WTC11 (cell line): ENCODE measurements at regions of chr7 and their contacts with region 1.

Region 1: GRCh38 chr7:151448261-151449252 is 8.6 kb upstream of the CRYGN start:
- DNase-seq: peak; percentile 82
- ATAC-seq: peak; percentile 80
- H3K4me3 Mint-ChIP-seq: peak overlapping the region; percentile 60
- H3K27ac Mint-ChIP-seq: no peak overlapping the region
- H3K4me1 Mint-ChIP-seq: peaks cover 20% of the 10 kb centered on the region
- H3K27me3 Mint-ChIP-seq: peaks cover 15% of the 10 kb centered on the region
- CTCF ChIP-seq: peak; percentile 72

Region 2: GRCh38 chr7:151368136-151368571 is 80.4 kb before region 1 on chr7:
- CTCF ChIA-PET with region 1: interaction called, 46 read pairs
- POLR2A ChIA-PET with region 1: no interaction called
- DNase-seq: peak; percentile 89
- ATAC-seq: peak; percentile 99
- H3K4me3 Mint-ChIP-seq: no peak overlapping the region
- H3K27ac Mint-ChIP-seq: no peak overlapping the region
- H3K4me1 Mint-ChIP-seq: peaks cover 11% of the 10 kb centered on the region
- H3K27me3 Mint-ChIP-seq: no peaks in the 10 kb centered on the region
- CTCF ChIP-seq: peak; percentile 93

Region 3: DNA sequence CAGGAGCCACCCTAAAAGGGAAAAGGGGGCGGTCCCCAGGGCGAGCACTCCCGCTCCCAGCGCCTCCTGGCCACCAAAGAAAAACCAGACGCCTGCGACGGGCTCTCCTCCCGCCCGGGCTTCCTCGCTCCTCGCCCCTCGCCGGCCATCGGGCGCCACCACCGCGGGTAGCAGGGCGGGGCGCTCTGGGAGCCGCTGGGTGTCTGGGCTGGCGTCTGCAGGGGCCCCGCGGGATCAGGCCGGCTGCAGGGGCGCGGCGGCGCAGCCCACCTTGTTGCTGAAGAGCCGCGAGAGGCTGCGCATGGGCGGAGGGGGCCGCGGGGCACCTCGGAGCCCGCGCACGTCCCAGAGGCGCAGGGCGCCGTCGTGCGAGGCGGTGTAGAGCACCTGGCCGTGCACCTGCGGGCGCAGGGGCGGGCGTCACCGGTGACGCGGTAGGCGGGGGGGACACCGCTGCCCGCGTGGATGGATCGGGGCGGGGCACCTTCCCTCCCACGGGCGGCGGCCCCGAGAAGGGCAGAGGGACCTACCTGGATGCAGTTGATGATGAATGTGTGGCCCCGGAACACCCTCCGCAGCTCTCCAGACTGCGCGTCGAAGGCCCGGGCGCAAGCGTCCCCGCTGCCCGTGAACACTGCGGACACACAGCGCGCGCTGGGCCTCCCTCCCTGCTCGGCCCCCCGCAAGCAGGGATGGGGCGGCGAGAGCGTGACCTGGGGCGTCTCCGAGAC is 67.0 kb before region 1 on chr7:
- CTCF ChIA-PET with region 1: interaction called, 12 read pairs
- POLR2A ChIA-PET with region 1: no interaction called
- DNase-seq: peak; percentile 74
- ATAC-seq: peak; percentile 79
- H3K4me3 Mint-ChIP-seq: peak overlapping the region; percentile 68
- H3K27ac Mint-ChIP-seq: no peak overlapping the region
- H3K4me1 Mint-ChIP-seq: peaks cover 12% of the 10 kb centered on the region
- H3K27me3 Mint-ChIP-seq: peaks cover 25% of the 10 kb centered on the region
- CTCF ChIP-seq: no peak

Region 4: GRCh38 chr7:151400626-151401315 is 47.8 kb before region 1 on chr7:
- CTCF ChIA-PET with region 1: interaction called, 16 read pairs
- POLR2A ChIA-PET with region 1: no interaction called
- DNase-seq: no peak
- ATAC-seq: no peak
- H3K4me3 Mint-ChIP-seq: no peak overlapping the region
- H3K27ac Mint-ChIP-seq: peak overlapping the region; percentile 7; the same call in 1 of the 2 replicates
- H3K4me1 Mint-ChIP-seq: peaks cover 25% of the 10 kb centered on the region
- H3K27me3 Mint-ChIP-seq: no peaks in the 10 kb centered on the region
- CTCF ChIP-seq: no peak

Region 5: GRCh38 chr7:151408839-151409666 is 39.5 kb before region 1 on chr7:
- CTCF ChIA-PET with region 1: interaction called, 22 read pairs
- POLR2A ChIA-PET with region 1: no interaction called
- DNase-seq: peak; percentile 39
- ATAC-seq: peak; percentile 46
- H3K4me3 Mint-ChIP-seq: peak overlapping the region; percentile 74
- H3K27ac Mint-ChIP-seq: peak overlapping the region; percentile 22; the same call in 1 of the 2 replicates
- H3K4me1 Mint-ChIP-seq: peaks cover 38% of the 10 kb centered on the region
- H3K27me3 Mint-ChIP-seq: peaks cover 39% of the 10 kb centered on the region
- CTCF ChIP-seq: no peak